CD4-positive, alpha-beta memory T cell (primary cell): ENCODE measurements at regions of chr11 and their contacts with region 1.

Region 1: GRCh38 chr11:123020968-123021367 is 39.3 kb upstream of the BSX start:
- DNase-seq: peak in 4 of 5 donors; percentile 21 to 34 (median 26)
- H3K4me3 ChIP-seq: no peak overlapping the region
- H3K4me3 Mint-ChIP-seq: no peak overlapping the region
- H3K27ac ChIP-seq: no peak overlapping the region
- H3K27ac Mint-ChIP-seq: no peak overlapping the region
- H3K4me1 ChIP-seq: peaks cover 8% of the 10 kb centered on the region
- H3K4me1 Mint-ChIP-seq: peaks cover 5 to 8% (median 8%) of the 10 kb centered on the region in 4 donors
- H3K27me3 ChIP-seq: no peaks in the 10 kb centered on the region
- H3K27me3 Mint-ChIP-seq: peaks cover 3 to 4% of the 10 kb centered on the region in 2 donors

Region 2: GRCh38 chr11:122796128-122796717 is 224.7 kb before region 1 on chr11:
- CTCF ChIA-PET with region 1: interaction called, 6 read pairs
- POLR2A ChIA-PET with region 1: no interaction called
- intact Hi-C with region 1: loop called (anchors 2 kb)
- DNase-seq: peak; percentile 33 to 59 (median 44)
- H3K4me3 ChIP-seq: no peak overlapping the region
- H3K4me3 Mint-ChIP-seq: no peak overlapping the region
- H3K27ac ChIP-seq: no peak overlapping the region
- H3K27ac Mint-ChIP-seq: peak overlapping the region in 2 of 7 donors; percentile 47 to 76
- H3K4me1 ChIP-seq: no peaks in the 10 kb centered on the region
- H3K4me1 Mint-ChIP-seq: peaks cover 0 to 2% (median 0%) of the 10 kb centered on the region in 4 donors
- H3K27me3 ChIP-seq: no peaks in the 10 kb centered on the region
- H3K27me3 Mint-ChIP-seq: no peaks in the 10 kb centered on the region

Region 3: DNA sequence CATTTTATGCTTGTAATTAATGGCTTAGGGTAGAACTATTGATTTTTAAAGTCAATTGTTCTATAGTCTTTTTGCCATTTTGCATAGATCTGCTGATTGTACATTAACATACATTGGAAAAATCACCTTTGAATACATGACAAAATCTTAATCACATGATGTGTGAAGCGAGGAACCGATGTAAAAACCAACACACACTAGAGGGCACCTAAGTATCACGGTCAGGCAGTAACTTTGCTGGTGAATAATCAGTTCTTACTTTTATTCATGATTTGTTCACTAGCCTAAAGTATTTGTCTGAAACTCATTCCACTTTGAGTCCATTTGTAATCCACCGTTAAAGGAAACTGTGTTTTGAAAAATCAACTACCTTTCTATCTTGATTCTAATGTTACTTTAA is 110.2 kb before region 1 on chr11:
- CTCF ChIA-PET with region 1: interaction called, 7 read pairs
- POLR2A ChIA-PET with region 1: no interaction called
- intact Hi-C with region 1: loop called (anchors 2 kb)
- DNase-seq: no peak
- H3K4me3 ChIP-seq: no peak overlapping the region
- H3K4me3 Mint-ChIP-seq: no peak overlapping the region
- H3K27ac ChIP-seq: no peak overlapping the region
- H3K27ac Mint-ChIP-seq: no peak overlapping the region
- H3K4me1 ChIP-seq: no peaks in the 10 kb centered on the region
- H3K4me1 Mint-ChIP-seq: no peaks in the 10 kb centered on the region
- H3K27me3 ChIP-seq: no peaks in the 10 kb centered on the region
- H3K27me3 Mint-ChIP-seq: no peaks in the 10 kb centered on the region

Region 4: DNA sequence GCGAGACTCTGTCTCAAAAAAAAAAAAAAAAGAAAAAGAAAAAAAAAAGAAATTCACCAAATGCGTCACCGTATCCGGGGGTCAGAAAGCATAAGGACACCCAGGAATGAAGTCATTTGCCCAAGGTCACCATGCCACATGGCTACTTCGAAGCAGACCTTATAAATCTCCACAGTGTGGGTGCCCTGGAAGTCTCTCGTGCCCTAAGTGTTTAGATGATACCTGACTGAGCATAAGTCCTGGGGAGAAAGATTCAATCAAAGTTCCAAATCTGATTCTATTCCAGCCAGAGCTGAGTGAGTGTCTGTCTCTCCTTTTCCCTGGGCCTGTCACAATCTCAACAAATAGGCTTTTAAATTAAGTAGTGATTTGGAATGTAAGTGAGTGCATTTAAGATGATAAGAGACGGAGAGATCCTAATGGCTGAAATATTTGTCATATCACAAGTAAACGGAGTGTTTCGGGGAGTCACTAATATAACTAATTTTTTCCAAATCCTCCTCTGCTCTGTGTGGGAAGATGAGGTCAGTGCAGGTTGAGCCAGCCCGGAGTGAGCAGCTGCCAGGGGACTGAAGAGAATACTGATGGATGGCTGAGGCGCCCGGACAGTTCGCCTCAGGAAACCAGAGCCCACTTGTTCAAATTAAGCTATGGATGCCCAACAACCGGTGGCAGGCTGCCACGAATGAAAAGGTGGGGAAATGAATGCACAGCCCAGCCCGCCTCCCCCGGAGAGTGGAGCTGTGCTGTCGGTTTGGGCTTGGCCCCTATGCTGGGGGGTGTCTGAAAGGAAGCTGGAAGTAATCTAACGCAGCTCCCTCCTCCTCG is 18.9 kb after region 1 on chr11:
- CTCF ChIA-PET with region 1: interaction called, 25 read pairs
- POLR2A ChIA-PET with region 1: no interaction called
- intact Hi-C with region 1: no loop called
- DNase-seq: no peak
- H3K4me3 ChIP-seq: no peak overlapping the region
- H3K4me3 Mint-ChIP-seq: no peak overlapping the region
- H3K27ac ChIP-seq: no peak overlapping the region
- H3K27ac Mint-ChIP-seq: no peak overlapping the region
- H3K4me1 ChIP-seq: no peaks in the 10 kb centered on the region
- H3K4me1 Mint-ChIP-seq: no peaks in the 10 kb centered on the region
- H3K27me3 ChIP-seq: no peaks in the 10 kb centered on the region
- H3K27me3 Mint-ChIP-seq: peaks cover 0 to 3% of the 10 kb centered on the region in 2 donors